ENCODE measurements at regions of chr16 and their contacts with region 1.

Region 1: GRCh38 chr16:71214746-71215381 is 15.7 kb downstream of the HYDIN start:
- DNase-seq: peak in 2 of 14 experiments; percentile 1 to 6
- ATAC-seq: no peak
- H3K4me3 ChIP-seq: no peak overlapping the region
- H3K4me3 Mint-ChIP-seq: no peak overlapping the region
- H3K27ac ChIP-seq: no peak overlapping the region
- H3K27ac Mint-ChIP-seq: no peak overlapping the region
- H3K4me1 ChIP-seq: no peaks in the 10 kb centered on the region
- H3K4me1 Mint-ChIP-seq: no peaks in the 10 kb centered on the region
- H3K27me3 ChIP-seq: no peaks in the 10 kb centered on the region
- H3K27me3 Mint-ChIP-seq: peaks cover 45% of the 10 kb centered on the region
- CTCF ChIP-seq: no peak

Region 2: DNA sequence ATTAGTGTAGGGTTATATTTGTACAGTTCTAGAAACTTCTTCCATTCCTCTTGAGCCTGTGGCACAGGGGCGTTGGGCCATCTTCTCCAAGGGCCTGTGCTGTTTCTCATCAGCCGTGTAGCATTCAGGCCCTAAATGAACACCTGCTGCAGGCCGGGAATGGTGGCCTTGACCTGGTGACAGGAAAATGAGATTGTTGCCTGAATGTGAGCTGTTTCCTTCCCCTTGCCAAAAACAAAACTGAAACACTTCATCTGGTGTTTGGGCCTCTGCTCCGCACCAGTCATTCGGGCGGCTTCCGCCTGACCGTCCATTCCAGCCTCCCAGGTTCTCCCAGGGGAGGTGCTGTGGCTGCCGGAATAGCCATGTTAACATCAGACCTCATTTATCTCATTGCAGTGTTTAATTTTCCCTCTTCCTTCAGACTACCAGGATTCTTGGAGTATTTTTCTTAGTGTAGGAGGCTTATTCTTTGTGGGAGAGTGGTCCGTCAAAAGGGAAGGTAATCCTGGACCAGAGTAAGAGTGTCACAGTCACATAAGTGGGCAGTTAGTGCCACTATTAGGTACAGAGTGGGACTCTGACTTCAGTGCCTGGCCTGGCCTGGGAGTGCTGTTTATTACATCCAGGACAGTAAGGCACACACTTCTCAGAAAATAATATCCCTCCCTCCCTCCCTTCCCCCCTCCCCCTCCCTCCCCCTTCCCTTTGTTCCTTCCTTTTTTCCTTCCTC is 1390.9 kb before region 1 on chr16:
- CTCF ChIA-PET with region 1: no interaction called
- POLR2A ChIA-PET with region 1: no interaction called
- intact Hi-C with region 1: no loop called
- DNase-seq: no peak
- ATAC-seq: no peak
- H3K4me3 ChIP-seq: no peak overlapping the region
- H3K4me3 Mint-ChIP-seq: no peak overlapping the region
- H3K27ac ChIP-seq: no peak overlapping the region
- H3K27ac Mint-ChIP-seq: no peak overlapping the region
- H3K4me1 ChIP-seq: no peaks in the 10 kb centered on the region
- H3K4me1 Mint-ChIP-seq: no peaks in the 10 kb centered on the region
- H3K27me3 ChIP-seq: no peaks in the 10 kb centered on the region
- H3K27me3 Mint-ChIP-seq: no peaks in the 10 kb centered on the region
- CTCF ChIP-seq: no peak

Region 3: DNA sequence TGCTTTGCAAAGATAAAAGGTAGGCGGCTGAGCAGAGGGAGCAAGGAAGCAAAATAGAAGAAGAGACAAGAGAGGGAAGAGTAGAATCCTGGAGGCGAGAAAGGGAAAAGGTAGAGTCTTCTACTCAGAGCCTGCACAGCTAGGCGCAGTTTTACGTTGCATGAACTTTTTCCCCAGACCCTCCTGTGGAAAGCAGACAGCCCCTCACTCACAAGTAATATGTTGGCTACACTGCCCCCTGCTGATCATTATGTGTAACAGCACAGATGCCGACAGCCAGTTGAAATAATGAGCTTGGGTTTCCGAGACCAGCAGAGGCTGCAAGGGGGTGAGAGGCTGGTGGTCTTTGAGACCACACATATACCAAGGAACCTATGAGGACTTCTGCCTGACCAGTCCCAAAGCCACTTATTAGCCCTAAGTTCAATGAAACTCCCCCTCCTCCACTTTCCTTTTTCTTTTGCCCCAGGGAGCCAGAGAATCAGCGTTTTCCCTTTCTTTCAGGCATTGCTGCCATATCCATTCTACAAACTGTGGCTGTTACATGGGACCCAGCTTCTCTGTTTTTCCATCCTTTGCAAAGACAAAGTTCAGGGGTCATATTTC is 96.8 kb after region 1 on chr16:
- CTCF ChIA-PET with region 1: interaction called, 3 read pairs
- POLR2A ChIA-PET with region 1: no interaction called
- intact Hi-C with region 1: loop called in 1 of 2 experiments (anchors 2 kb)
- DNase-seq: peak in 7 of 14 experiments; percentile 1 to 63 (median 18)
- ATAC-seq: no peak
- H3K4me3 ChIP-seq: no peak overlapping the region
- H3K4me3 Mint-ChIP-seq: no peak overlapping the region
- H3K27ac ChIP-seq: no peak overlapping the region
- H3K27ac Mint-ChIP-seq: no peak overlapping the region
- H3K4me1 ChIP-seq: no peaks in the 10 kb centered on the region
- H3K4me1 Mint-ChIP-seq: no peaks in the 10 kb centered on the region
- H3K27me3 ChIP-seq: peaks cover 6 to 14% of the 10 kb centered on the region in 2 experiments
- H3K27me3 Mint-ChIP-seq: peaks cover 61% of the 10 kb centered on the region
- CTCF ChIP-seq: peak; percentile 79

Measured in CD4-positive, alpha-beta T cell (primary cell).